ENCODE measurements at regions of chr11 and their contacts with region 1.

Region 1: DNA sequence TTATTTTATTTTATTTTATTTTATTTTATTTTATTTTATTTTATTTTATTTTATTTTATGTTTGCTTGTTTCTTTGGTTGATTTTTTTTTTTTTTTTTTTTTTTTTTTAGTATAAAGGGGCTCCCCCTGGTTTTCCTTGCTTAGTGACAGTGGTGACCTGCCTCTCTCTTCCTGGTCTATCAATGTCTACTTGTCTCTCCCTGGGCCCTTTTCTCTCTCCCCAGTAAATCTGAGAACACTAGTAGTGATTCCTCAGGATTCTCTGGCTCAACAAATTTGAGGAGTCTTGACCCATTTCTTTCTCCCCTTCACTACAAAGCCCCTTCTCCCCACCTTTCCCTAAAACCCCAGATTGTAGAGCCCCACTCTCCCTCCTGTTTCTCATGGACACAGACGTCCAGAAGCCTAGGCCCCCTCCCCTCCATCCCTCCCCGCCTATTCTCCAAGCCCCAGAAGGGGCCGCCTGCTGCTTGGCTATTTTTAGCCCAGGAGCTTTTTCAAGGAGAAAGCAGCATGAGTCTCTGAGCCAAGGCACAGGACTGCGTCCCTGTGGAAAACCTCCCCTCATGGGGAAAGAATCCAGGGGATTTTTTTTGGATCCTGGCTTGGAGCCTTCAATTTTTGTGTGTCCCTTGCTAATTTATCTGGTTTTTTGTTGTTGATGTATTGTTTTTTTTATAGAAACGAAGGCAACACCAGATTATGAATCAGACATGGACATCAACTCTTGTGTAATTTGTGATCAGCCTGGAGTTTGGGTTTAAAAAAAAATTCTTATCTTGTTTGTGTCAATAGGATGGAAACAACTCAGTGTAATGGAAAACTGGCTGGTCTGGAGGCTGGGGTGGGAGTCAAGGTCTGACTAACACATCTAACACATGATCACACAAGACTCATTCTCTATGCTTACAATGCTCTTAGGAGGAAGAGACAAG is 17.5 kb upstream of the ACCSL start:
- DNase-seq: peak in 2 of 6 donors; percentile 20 to 59
- ATAC-seq: peak; percentile 35 to 88 (median 76)
- H3K4me3 ChIP-seq: no peak overlapping the region
- H3K27ac ChIP-seq: peak overlapping the region in 2 of 4 donors; percentile 55 to 57
- H3K4me1 ChIP-seq: peaks cover 0 to 7% (median 0%) of the 10 kb centered on the region in 3 donors
- H3K27me3 ChIP-seq: no peaks in the 10 kb centered on the region
- CTCF ChIP-seq: no peak

Region 2: GRCh38 chr11:43868852-43869567 is 161.2 kb before region 1 on chr11:
- intact Hi-C with region 1: no loop called
- DNase-seq: no peak
- ATAC-seq: peak in 3 of 4 donors; percentile 14 to 73 (median 71)
- H3K4me3 ChIP-seq: no peak overlapping the region
- H3K27ac ChIP-seq: no peak overlapping the region
- H3K4me1 ChIP-seq: no peaks in the 10 kb centered on the region
- H3K27me3 ChIP-seq: peaks cover 0 to 5% (median 0%) of the 10 kb centered on the region in 4 donors
- CTCF ChIP-seq: no peak

Region 3: DNA sequence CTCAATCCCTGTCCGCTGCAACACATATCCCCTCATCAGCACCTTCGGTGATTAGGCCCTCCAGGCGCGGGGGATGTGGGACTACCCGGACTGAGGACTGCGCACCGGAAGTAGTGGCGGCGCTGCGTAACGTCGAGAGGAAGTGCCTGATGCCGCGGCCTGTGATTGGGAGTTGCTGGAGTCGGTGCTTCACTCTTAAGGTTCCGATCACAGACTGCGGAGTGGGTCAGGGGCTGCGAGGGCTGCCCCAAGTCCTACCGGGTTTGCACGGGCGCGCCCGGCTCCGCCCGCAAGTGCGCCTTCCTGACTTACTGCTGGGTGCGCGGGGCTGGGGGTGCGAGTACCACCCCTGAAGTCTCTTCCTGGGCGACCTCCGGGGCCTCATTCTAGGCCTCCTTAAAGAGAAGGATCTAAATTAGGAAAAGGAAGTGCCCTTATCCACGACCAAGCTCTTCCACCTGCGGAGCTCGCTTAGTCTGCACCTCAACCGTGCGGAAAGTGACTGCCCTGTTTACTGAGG is 149.5 kb before region 1 on chr11 and contains the start of gene ALKBH3:
- intact Hi-C with region 1: loop called in 1 of 3 experiments (anchors 5 kb)
- DNase-seq: peak; percentile 87 to 97 (median 90)
- ATAC-seq: peak; percentile 100
- H3K4me3 ChIP-seq: peak within 1 kb of the TSS; percentile 64 to 85 (median 70)
- H3K27ac ChIP-seq: no peak within 1 kb of the TSS
- H3K4me1 ChIP-seq: peaks cover 0 to 12% (median 4%) of the 10 kb centered on the region in 3 donors
- H3K27me3 ChIP-seq: no peaks in the 10 kb centered on the region
- CTCF ChIP-seq: no peak
- total RNA-seq, gene ALKBH3: 13.9 to 20.1 (median 17.0) TPM